ENCODE measurements at regions of chr15 and their contacts with region 1.

Region 1: GRCh38 chr15:79743031-79743430 is 153.8 kb downstream of the MTHFS start:
- DNase-seq: no peak
- ATAC-seq: no peak
- H3K4me3 ChIP-seq: no peak overlapping the region
- H3K27ac ChIP-seq: no peak overlapping the region
- H3K4me1 ChIP-seq: no peaks in the 10 kb centered on the region
- H3K27me3 ChIP-seq: no peaks in the 10 kb centered on the region
- CTCF ChIP-seq: no peak

Region 2: DNA sequence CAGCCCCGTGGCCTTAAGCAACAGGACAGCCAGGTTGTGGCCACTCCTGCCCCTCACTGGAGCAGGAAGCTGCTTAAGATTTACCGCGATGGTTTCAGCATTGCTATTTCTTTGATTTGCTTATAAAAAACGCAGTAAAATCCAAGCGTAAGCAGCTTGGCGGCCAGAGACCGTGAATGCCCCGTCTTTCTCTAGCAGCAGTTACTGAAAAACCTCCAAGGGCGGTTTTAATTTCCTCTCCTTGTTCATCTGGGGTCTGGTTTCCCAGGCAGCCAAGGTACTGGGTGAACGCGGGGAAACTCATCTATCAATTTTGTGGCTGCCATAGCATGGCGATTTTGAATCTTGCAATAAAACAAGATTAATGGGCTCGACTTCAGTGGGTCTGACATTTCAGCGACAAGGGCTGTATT is 180.6 kb before region 1 on chr15:
- intact Hi-C with region 1: no loop called
- DNase-seq: no peak
- ATAC-seq: no peak
- H3K4me3 ChIP-seq: no peak overlapping the region
- H3K27ac ChIP-seq: no peak overlapping the region
- H3K4me1 ChIP-seq: no peaks in the 10 kb centered on the region
- H3K27me3 ChIP-seq: peaks cover 12% of the 10 kb centered on the region
- CTCF ChIP-seq: no peak

Region 3: GRCh38 chr15:79615754-79616153 is 127.3 kb before region 1 on chr15:
- intact Hi-C with region 1: no loop called
- DNase-seq: no peak
- ATAC-seq: no peak
- H3K4me3 ChIP-seq: no peak overlapping the region
- H3K27ac ChIP-seq: no peak overlapping the region
- H3K4me1 ChIP-seq: no peaks in the 10 kb centered on the region
- H3K27me3 ChIP-seq: no peaks in the 10 kb centered on the region
- CTCF ChIP-seq: no peak

Region 4: DNA sequence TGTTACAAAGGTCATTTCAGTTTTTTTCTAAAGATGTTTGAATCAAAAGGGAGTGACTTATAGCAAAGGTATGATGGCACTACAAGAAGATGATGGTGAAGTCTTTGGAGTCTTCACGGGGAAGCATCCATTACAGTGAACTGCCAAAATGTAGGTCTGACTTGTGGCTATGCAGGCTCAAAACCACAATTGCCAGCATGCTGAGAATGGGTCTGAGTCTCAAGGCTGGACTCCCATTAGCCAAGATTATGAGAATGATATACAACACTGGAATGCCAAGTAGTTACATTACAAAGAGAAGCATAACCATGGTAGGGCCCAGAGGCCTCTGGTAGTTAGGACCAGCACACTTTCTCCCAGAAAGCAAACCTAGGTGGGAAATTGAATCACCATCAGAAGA is 40.4 kb before region 1 on chr15:
- intact Hi-C with region 1: loop called (anchors 5 kb)
- DNase-seq: no peak
- ATAC-seq: no peak
- H3K4me3 ChIP-seq: no peak overlapping the region
- H3K27ac ChIP-seq: no peak overlapping the region
- H3K4me1 ChIP-seq: no peaks in the 10 kb centered on the region
- H3K27me3 ChIP-seq: peaks cover 5% of the 10 kb centered on the region
- CTCF ChIP-seq: no peak

Region 5: DNA sequence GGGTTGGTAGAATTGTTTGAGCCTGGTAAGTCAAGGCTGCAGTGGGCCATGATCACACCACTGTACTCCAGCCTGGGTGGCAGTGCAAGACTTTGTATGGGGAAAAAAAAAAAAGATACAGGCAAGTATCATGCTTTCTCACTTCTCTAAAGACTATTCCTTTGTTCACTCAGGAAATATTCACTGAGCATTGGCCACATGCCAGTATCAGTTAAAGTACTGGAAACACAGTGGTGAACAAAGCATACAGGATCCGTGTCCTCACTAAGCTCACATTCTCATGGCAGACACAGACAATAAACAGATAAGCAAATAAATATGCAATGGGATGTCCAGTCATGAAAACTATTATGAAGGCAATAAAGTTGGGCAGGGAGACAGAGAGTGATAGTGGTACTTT is 158.9 kb after region 1 on chr15:
- intact Hi-C with region 1: no loop called
- DNase-seq: no peak
- ATAC-seq: no peak
- H3K4me3 ChIP-seq: no peak overlapping the region
- H3K27ac ChIP-seq: no peak overlapping the region
- H3K4me1 ChIP-seq: peaks cover 30% of the 10 kb centered on the region
- H3K27me3 ChIP-seq: no peaks in the 10 kb centered on the region
- CTCF ChIP-seq: no peak

Measured in lower lobe of right lung (tissue), 2 donors.